Common myeloid progenitor, CD34-positive (primary cell): ENCODE measurements at regions of chr3 and their contacts with region 1.

Region 1: DNA sequence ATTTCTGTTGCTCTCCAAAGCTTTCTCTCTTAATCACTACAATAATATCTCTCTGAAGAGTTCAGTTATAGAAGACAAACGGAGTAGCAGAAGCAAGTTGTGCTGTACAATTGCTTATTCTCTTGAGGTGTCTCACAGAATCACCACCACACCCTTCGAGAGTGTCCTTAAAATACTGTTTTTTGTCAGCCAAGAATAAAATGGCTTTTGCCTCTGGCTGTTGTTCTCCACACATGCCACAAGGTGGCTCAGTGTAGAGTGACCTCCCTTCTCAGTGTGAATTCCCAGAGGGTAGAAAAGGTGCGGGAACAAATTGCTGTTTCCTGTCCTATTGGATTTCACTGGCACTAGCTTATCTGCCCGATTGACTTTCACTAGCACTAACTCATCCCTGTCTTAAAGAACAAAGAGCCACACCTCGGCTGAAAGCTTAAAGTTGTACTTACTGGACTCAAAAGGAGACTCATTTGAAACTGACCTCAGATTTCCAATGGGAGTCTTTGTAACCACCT is 134.2 kb upstream of the SATB1 start:
- DNase-seq: peak; percentile 38 to 56 (median 40)
- H3K4me3 ChIP-seq: no peak overlapping the region
- H3K27ac ChIP-seq: no peak overlapping the region
- H3K4me1 ChIP-seq: peaks cover 0 to 11% (median 6%) of the 10 kb centered on the region in 4 experiments
- H3K27me3 ChIP-seq: no peaks in the 10 kb centered on the region

Region 2: GRCh38 chr3:18572809-18573208 is 13.4 kb after region 1 on chr3:
- CTCF ChIA-PET with region 1: interaction called, 12 read pairs
- POLR2A ChIA-PET with region 1: no interaction called
- DNase-seq: no peak
- H3K4me3 ChIP-seq: no peak overlapping the region
- H3K27ac ChIP-seq: no peak overlapping the region
- H3K4me1 ChIP-seq: no peaks in the 10 kb centered on the region
- H3K27me3 ChIP-seq: no peaks in the 10 kb centered on the region

Region 3: GRCh38 chr3:18740631-18741583 is 181.5 kb after region 1 on chr3:
- CTCF ChIA-PET with region 1: no interaction called
- POLR2A ChIA-PET with region 1: no interaction called
- DNase-seq: peak; percentile 80 to 91 (median 85)
- H3K4me3 ChIP-seq: peak overlapping the region in 3 of 7 experiments; percentile 13 to 64 (median 44)
- H3K27ac ChIP-seq: peak overlapping the region in 1 of 2 experiments; percentile 41
- H3K4me1 ChIP-seq: peaks cover 15 to 29% (median 22%) of the 10 kb centered on the region in 4 experiments
- H3K27me3 ChIP-seq: no peaks in the 10 kb centered on the region

Region 4: DNA sequence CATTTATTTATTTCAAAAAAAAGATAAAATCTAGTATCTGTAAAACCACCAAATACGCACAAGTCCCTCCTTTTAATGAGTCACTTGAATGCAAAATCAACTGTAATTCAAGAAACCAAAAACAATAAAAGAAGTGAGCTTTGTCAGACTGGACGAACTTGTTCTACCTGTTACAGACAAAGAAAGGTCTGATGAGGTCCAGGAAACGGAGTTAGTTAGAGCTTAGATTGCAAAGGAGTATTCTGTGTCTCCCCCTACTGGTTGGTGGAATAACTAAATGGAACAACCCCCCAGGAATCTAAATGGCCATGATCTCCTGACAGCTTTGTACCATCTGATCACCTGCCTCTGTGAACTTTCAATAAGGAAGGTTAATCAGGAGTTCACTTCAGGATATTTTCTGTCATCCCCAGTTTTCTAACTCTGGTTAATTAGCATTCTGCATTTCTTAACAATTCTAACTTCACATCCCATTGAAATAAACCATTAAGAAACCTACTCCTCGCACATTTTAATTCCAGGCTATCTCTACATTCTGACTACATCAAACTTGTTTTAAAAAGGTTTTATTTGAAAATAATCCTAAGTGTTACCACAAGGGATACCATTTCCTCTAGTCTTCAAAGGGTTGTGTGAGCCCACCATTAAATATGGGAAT is 198.8 kb after region 1 on chr3:
- CTCF ChIA-PET with region 1: interaction called, 39 read pairs
- POLR2A ChIA-PET with region 1: no interaction called
- DNase-seq: peak; percentile 82 to 89 (median 84)
- H3K4me3 ChIP-seq: no peak overlapping the region
- H3K27ac ChIP-seq: no peak overlapping the region
- H3K4me1 ChIP-seq: peaks cover 0 to 3% (median 0%) of the 10 kb centered on the region in 4 experiments
- H3K27me3 ChIP-seq: no peaks in the 10 kb centered on the region

Region 5: DNA sequence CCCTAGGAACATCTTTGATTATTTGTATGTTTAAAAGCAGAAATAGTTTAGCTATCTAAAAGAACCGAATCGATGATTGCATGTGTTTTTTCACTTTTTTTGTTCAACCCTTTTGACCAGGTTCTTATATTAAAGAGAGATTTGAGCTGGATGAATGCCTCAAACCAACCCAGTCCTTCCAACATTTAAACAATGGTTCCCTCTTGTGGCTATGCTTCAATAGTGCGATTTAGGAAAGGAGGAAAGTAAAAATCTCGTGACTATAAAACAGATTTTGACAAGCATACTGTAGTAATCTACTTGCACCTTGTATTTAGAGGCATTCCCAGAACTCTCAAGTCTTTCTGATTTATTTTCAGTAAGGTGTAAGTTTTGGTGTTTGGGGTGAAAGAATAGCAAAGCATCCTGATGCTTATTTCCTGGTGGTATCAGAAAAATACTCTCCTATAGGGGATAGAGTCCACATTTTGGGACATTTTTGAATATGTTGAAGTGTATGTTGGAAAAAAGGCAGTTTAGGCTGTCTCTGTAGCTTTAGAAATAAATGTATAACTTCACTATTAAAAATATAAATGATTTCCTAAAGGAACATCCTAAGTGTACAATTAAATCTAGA is 429.3 kb after region 1 on chr3:
- CTCF ChIA-PET with region 1: interaction called, 13 read pairs
- POLR2A ChIA-PET with region 1: no interaction called
- DNase-seq: peak; percentile 34 to 72 (median 68)
- H3K4me3 ChIP-seq: no peak overlapping the region
- H3K27ac ChIP-seq: no peak overlapping the region
- H3K4me1 ChIP-seq: no peaks in the 10 kb centered on the region
- H3K27me3 ChIP-seq: no peaks in the 10 kb centered on the region